Cardiac septum (tissue), 1 donor: ENCODE measurements at regions of chr1 and their contacts with region 1.

Region 1: GRCh38 chr1:22416555-22417454 is 34.8 kb upstream of the ZBTB40 start:
- DNase-seq: no peak

Region 2: DNA sequence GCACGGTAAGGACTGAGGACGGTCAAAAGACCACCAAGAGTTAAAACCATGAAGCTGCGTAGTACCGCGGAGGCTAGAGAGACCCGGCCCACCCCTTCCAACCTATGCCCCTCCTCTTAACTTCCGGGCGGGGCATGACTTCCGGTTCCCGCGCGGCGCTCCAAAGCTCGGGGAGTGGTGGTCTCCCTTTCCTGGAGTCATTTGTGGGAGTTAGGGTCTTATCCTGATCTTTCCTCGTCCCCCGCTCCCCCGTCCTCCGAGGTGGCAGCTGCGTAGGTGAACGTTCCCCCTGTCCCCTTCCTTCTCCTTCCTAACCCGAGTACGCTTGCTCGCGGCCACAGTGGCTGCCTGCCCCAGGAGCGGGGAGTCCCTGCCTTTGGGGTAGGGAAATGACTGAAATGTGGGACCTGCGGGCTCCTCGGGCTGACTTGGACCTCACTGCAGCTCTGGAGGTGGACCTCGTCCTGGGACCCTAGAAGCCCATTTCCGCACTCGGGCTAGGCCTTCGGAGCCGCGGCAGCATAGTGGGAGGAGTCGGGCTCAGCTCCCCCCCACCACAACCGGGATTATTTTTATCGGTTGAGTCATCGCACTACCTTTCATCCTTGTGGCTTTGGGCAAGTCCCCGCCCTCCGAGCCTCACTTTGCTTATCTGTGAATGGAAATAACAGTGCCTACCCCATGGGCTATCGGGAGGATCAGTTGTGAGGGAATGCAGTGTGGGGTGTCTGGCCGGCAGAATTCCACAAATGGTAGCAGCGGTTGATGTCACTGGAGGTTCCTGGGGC is 391.2 kb before region 1 on chr1:
- intact Hi-C with region 1: loop called (anchors 5 kb)
- DNase-seq: peak; percentile 94

Region 3: DNA sequence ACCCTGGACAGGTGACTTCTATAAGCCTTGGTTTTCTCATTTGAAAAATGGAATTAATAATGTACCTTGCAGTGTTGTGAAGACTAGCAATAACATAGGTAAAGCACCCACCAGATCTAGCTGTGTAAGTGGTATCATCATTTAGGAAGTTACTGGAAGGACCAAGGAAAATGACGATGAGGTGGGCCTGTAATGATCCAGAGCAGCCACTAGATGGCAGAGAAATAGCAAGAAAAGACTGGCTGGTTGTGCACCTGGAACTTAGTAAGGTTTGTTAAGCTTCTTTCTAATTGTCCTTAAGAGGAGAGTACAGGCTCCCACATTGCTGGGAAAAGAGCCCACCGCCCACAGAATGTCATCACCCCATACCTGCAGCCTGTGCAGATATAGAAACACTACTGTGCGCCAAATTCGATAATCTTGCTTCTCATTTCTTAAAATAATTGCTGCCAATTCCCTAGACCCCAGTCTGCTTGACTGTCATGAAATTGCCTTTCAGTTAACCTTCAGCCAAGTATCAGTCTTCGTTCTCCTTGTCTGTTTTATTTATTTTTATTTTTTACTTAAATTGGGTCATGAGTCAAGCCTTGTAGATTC is 311.1 kb before region 1 on chr1:
- intact Hi-C with region 1: loop called (anchors 5 kb)
- DNase-seq: no peak

Region 4: GRCh38 chr1:22341791-22342605 is 74.8 kb before region 1 on chr1:
- intact Hi-C with region 1: no loop called
- DNase-seq: no peak

Region 5: DNA sequence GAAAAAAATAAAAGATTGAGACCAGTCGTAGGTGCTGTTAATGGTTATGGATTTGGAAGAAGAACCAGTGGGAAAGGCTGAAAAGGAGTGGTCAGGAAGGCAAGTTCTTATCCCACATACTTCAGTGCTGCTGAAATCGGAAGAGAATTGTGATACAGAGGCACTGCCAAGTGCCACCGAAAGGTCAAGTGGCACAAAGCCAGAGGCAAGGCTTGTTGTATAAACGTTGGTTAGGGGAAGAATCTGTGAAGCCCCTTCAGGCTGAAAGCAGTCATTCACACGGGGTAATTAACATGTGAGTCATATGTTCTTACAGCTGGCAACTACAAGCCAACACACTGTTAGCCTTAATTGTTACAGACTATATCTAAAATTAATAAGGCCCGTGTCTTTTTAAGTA is 83.7 kb after region 1 on chr1:
- intact Hi-C with region 1: loop called (anchors 5 kb)
- DNase-seq: no peak

Region 6: GRCh38 chr1:22641906-22642636 is 225.3 kb after region 1 on chr1:
- intact Hi-C with region 1: loop called (anchors 1 kb)
- DNase-seq: peak; percentile 87